Activated naive CD4-positive, alpha-beta T cell treated with anti-CD3 and anti-CD28 coated beads for 36 hours (primary cell): ENCODE measurements at regions of chr1 and their contacts with region 1.

Region 1: GRCh38 chr1:88800382-88801051 is 90.8 kb downstream of the GTF2B start:
- DNase-seq: peak; percentile 72
- H3K4me3 Mint-ChIP-seq: no peak overlapping the region
- H3K27ac Mint-ChIP-seq: peak overlapping the region; percentile 74
- H3K4me1 Mint-ChIP-seq: peaks cover 17% of the 10 kb centered on the region
- H3K27me3 Mint-ChIP-seq: no peaks in the 10 kb centered on the region

Region 2: DNA sequence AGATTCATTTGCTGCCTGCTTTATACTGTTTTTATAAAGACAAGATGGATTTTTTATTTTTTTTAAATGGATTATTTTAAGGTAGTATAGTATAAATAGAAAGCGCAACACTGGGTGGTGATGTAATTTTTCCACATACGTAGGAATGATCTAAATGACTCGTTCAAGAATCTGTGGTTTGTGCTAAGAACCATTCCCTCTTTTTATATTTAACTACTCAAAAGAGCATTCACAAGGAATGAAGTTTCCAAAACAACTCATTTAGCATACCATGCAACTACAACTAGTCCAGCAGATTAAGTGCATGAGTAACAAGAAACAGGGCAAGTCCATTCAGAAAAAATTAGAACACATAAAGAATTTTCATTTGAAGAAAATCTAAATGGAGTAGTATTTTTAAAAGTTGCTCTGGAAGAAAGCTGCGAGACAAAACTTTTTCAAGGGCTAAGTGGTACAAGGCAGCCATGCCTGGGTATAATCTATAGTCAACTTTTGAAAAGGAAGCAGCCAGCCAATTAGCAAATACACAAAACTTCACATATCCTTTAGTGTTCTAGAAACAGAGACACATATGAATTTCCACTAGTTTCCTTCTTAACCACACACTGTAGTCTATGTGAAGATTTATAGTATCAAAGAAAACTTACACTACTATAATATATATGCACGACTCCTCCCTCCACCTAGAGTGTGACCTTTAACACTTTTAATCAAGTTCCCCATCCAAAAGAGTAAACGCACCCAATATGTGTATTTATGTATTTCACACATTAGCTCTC is 67.4 kb after region 1 on chr1:
- CTCF ChIA-PET with region 1: no interaction called
- intact Hi-C with region 1: loop called (anchors 1 kb)
- DNase-seq: no peak
- H3K4me3 Mint-ChIP-seq: no peak overlapping the region
- H3K27ac Mint-ChIP-seq: peak overlapping the region; percentile 84
- H3K4me1 Mint-ChIP-seq: peaks cover 57% of the 10 kb centered on the region
- H3K27me3 Mint-ChIP-seq: no peaks in the 10 kb centered on the region

Region 3: GRCh38 chr1:88877382-88877825 is 76.9 kb after region 1 on chr1:
- CTCF ChIA-PET with region 1: interaction called, 15 read pairs
- intact Hi-C with region 1: loop called (anchors 1 kb)
- DNase-seq: no peak
- H3K4me3 Mint-ChIP-seq: no peak overlapping the region
- H3K27ac Mint-ChIP-seq: no peak overlapping the region
- H3K4me1 Mint-ChIP-seq: peaks cover 43% of the 10 kb centered on the region
- H3K27me3 Mint-ChIP-seq: no peaks in the 10 kb centered on the region

Region 4: GRCh38 chr1:88935522-88936222 is 135.2 kb after region 1 on chr1:
- CTCF ChIA-PET with region 1: no interaction called
- intact Hi-C with region 1: loop called (anchors 5 kb)
- DNase-seq: peak; percentile 9
- H3K4me3 Mint-ChIP-seq: no peak overlapping the region
- H3K27ac Mint-ChIP-seq: no peak overlapping the region
- H3K4me1 Mint-ChIP-seq: no peaks in the 10 kb centered on the region
- H3K27me3 Mint-ChIP-seq: no peaks in the 10 kb centered on the region